ENCODE measurements at regions of chr5 and their contacts with region 1.

Region 1: DNA sequence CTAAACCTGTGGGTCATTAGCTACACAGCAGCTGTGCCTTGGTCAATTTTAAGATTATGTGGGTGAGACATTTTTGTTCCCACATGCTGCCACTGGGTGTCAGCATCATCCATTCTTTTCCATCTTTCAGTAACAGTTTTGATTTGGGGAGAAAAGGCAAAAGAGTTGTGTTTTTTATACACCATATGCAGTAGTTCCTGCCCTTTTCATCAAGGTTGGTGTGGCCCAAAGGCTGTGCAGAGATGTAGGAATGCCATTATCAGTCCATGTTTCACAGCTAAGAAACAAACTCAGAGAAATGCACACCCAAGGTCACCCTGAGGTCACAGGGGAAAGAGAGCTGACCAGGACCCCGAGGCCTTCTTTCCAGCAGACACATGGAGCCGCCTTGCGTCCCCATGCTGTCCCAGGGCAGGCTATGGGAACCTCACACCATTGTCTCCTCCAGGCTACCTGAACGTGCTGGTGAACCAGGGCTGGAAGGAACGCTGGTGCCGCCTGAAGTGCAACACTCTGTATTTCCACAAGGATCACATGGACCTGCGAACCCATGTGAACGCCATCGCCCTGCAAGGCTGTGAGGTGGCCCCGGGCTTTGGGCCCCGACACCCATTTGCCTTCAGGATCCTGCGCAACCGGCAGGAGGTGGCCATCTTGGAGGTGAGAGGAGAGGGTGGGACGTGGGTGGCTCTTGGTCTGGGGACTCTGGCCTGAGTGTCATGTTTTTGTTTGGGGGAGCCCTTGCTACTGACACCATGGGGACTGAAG is 27.8 kb upstream of the GRPEL2 start:
- DNase-seq: no peak

Region 2: GRCh38 chr5:149367249-149367971 is 49.9 kb after region 1 on chr5:
- intact Hi-C with region 1: loop called (anchors 2 kb)
- DNase-seq: no peak

Region 3: DNA sequence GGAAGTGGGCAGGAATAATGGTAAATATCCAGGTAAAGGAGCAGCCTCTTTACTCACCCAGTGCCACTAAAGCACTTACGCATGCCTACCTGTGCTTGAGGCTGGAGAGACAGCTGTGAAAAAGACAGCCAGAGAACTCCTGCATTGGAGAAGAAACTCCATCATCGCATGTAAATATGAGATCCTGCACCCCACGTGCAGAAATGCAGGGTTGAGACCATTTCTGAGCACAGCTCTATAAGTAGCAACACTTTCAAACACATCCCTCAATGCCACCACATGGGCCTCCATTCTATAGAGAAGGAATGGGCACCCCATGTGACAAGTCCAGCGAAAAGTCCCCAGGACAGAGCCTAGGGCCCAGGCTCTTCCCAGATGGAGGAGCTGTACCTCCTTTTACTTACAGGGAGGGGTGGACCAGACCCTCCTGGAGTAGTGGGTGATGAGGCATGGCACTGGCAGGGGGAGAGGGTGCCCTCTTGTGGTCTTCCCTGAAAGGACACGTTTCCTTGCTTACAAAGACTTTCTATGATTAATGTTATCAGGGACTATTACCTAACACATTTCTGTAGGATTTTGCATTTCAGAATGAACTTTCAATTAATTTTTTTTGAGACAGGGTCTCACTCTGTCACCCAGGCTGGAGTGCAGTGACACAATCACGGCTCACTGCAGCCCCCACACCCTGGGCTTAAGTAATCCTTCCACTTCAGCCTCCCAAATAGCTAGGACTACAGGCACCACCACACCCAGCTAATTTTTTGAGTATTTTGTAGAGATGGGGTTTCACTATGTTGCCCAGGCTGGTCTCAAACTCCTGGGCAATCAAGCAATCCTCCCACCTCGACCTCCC is 116.9 kb after region 1 on chr5:
- intact Hi-C with region 1: loop called (anchors 5 kb)
- DNase-seq: no peak

Region 4: DNA sequence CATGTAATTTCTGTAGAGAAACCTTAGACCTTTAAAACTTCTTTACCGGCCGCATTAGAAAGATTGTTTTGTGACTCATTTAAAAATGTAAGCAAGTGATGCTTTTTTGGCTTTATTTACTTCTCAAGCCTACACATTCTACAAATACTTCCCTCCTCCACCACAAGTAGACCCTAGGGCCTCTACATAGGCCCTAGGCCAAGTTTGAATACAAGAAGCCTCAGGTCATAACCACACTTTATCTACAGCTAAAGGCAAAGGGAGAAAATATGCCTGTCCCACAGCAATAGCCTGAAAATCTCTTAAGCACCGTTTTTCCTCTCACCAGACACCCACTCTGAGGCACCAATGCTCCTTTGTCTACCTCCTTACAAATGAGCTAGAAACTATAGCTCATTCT is 179.9 kb after region 1 on chr5:
- intact Hi-C with region 1: no loop called
- DNase-seq: no peak

Region 5: DNA sequence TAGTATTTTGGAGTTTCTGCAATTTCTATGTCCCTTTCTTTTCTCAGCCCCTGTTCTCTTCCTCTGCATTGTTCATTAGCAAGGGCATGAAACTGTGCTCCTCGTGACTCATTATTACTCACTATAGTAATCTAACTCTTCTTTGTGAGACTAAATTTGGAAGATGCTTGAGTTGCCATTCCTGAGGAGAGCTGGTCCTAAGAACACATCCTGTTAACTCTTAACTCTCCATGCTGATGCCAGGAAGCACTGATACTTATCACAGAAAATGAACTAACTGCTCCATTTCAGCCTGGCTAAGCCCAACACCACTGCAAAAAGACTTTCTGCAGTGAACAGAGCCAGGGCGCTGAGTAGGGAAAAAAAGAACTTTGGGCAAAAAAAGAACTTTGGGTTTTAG is 244.4 kb after region 1 on chr5:
- intact Hi-C with region 1: loop called (anchors 2 kb)
- DNase-seq: no peak